Transverse colon (tissue), 4 donors: ENCODE measurements at regions of chr3 and their contacts with region 1.

Region 1: GRCh38 chr3:7607676-7608075 is 746.8 kb downstream of the GRM7 start:
- DNase-seq: no peak
- H3K4me3 ChIP-seq: no peak overlapping the region
- H3K27ac ChIP-seq: no peak overlapping the region
- H3K4me1 ChIP-seq: no peaks in the 10 kb centered on the region
- H3K27me3 ChIP-seq: no peaks in the 10 kb centered on the region
- CTCF ChIP-seq: no peak
- EP300 ChIP-seq: no peak
- POLR2A ChIP-seq: no peak

Region 2: GRCh38 chr3:6022621-6023020 is 1585.1 kb before region 1 on chr3:
- in situ Hi-C with region 1: no loop called
- intact Hi-C with region 1: no loop called
- DNase-seq: no peak
- H3K4me3 ChIP-seq: no peak overlapping the region
- H3K27ac ChIP-seq: no peak overlapping the region
- H3K4me1 ChIP-seq: no peaks in the 10 kb centered on the region
- H3K27me3 ChIP-seq: no peaks in the 10 kb centered on the region
- CTCF ChIP-seq: no peak
- EP300 ChIP-seq: no peak
- POLR2A ChIP-seq: no peak

Region 3: DNA sequence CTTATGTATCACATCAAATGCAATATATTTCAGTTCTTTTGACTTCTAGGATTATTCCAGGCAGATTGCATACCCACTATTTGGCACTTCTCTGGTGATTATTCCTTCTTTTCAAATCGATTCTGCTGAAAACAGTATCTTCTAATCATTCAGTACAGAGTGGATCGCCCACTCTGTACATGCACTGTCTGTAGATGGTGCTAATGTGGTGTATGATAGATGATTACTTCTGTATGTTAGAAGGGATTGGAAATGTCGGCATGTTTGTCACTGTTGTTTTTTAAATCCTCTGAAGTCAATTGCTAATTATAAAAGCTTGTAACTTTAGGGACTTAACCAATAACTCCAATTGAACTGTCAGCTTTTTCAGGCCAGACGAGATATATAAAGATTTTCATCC is 104.2 kb before region 1 on chr3:
- in situ Hi-C with region 1: no loop called
- intact Hi-C with region 1: no loop called
- DNase-seq: no peak
- H3K4me3 ChIP-seq: no peak overlapping the region
- H3K27ac ChIP-seq: no peak overlapping the region
- H3K4me1 ChIP-seq: no peaks in the 10 kb centered on the region
- H3K27me3 ChIP-seq: no peaks in the 10 kb centered on the region
- CTCF ChIP-seq: no peak
- EP300 ChIP-seq: no peak
- POLR2A ChIP-seq: no peak

Region 4: GRCh38 chr3:7546253-7546652 is 61.4 kb before region 1 on chr3:
- in situ Hi-C with region 1: no loop called
- intact Hi-C with region 1: no loop called
- DNase-seq: no peak
- H3K4me3 ChIP-seq: no peak overlapping the region
- H3K27ac ChIP-seq: no peak overlapping the region
- H3K4me1 ChIP-seq: no peaks in the 10 kb centered on the region
- H3K27me3 ChIP-seq: no peaks in the 10 kb centered on the region
- CTCF ChIP-seq: peak in 2 of 5 experiments; percentile 6 to 12
- EP300 ChIP-seq: no peak
- POLR2A ChIP-seq: no peak

Region 5: DNA sequence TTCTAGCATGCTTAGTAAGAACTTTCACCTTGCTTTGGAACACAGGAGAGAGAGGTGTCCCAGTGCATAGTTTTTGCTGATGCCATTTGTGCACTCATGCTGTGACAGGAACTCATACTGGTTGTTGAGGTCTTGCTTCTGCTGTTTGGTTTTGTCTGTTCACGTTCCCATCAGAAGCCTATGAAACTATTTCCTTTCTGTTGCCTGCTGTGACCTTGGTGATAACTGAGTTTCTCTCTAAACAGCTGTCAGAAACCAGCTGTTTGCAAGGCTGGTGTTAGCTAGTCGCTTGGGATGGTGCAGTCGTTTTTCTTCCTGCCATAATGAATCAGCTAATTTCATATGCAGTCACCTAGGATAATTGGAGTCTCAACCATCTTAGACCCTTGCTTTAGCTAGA is 22.6 kb before region 1 on chr3:
- in situ Hi-C with region 1: no loop called
- intact Hi-C with region 1: loop called (anchors 1 kb)
- DNase-seq: no peak
- H3K4me3 ChIP-seq: no peak overlapping the region
- H3K27ac ChIP-seq: no peak overlapping the region
- H3K4me1 ChIP-seq: no peaks in the 10 kb centered on the region
- H3K27me3 ChIP-seq: no peaks in the 10 kb centered on the region
- CTCF ChIP-seq: no peak
- EP300 ChIP-seq: no peak
- POLR2A ChIP-seq: no peak